ENCODE measurements at regions of chr10 and their contacts with region 1.

Region 1: GRCh38 chr10:101353692-101354327 is at the start of gene BTRC:
- DNase-seq: peak; percentile 95 to 100 (median 97)

Region 2: GRCh38 chr10:101291331-101292193 is 62.2 kb before region 1 on chr10:
- intact Hi-C with region 1: loop called (anchors 5 kb)
- DNase-seq: peak; percentile 44 to 93 (median 70)